ENCODE measurements at regions of chr3 and their contacts with region 1.

Region 1: DNA sequence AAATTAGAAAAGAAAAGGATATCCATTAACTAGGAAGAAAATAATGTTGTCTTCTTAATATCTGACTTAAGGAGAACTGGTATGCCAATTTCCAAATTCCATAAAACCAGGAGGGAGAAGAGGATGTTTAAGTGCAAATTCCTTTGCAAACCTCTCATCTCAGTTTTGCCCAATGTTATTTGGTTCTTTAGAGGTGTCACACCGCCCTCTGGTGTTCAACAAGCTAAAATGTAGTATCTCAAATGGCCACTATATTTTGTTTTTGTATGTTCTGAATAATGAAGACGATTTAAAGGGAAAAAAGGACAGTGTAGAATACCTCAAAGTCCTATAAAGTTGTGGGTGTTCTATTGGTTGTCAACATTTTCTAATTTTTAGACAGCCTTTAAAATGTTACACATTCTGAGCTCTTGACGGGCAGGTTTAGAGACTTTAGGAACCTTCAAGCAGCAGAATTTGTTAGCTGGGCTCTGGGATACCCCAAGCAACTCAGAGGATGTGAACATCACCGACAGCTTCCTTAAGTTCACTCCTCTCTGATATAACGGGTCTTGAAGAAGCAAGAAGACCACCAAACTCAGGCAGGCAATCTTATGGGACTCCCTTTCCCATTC is 458.3 kb downstream of the MFSD1 start:
- DNase-seq: peak in 35 of 42 donors; percentile 15 to 84 (median 56)

Region 2: DNA sequence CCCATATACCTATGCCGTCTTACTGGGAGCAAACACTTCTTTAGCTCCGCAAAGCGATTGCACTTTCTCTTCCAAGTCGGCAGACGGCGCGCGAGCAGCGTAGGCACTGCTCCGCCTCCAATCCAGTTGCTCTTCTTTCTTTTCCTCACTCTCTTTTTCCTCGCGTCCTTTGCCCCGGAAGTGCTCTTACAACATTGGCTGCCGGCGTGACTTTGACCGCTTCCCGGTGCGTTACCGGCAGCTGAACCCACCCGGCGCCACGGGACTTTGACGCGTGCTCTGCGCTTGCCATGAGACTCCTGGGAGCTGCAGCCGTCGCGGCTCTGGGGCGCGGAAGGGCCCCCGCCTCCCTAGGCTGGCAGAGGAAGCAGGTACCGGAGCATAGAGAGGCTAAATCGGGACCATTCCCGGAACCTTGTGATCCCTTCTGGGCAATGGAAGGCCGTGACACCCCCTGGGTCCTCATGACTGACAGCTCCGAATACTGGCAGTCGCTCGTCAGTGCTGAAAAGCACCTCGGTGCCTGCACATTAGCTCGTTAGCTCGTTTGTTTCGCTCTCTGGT is 615.7 kb before region 1 on chr3 and contains the start of gene GFM1:
- intact Hi-C with region 1: no loop called
- DNase-seq: peak; percentile 85 to 98 (median 95)

Region 3: DNA sequence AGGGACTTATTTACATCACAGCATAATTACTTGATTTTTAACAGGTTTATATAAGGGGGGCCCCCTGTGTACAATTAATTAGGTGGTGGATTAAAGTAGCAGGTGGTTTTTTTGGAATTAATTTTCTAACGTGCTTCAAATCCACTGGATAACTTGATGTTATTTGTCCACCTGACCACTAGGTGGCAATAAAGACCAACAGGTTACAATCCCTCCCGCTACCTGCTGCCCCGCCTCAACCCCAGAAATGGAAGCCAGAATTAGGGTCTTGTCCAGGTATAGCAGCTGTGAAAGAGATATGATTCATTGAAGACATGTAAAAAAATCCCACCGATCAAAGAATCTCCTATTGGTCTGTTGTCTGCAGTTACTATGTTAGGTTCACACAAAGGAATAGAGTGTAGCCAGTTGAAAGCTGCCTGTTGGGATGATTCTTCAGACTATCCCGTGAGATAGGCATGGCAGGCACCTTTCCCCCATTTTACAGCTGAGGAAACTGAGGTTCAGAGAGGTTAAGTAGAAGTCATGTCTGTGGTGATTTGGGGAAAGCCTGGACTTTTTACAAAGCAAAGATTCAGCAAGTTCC is 414.3 kb before region 1 on chr3:
- intact Hi-C with region 1: loop called (anchors 5 kb)
- DNase-seq: peak in 18 of 42 donors; percentile 10 to 71 (median 38)

Region 4: GRCh38 chr3:159586571-159587202 is 326.5 kb after region 1 on chr3:
- intact Hi-C with region 1: loop called (anchors 10 kb)
- DNase-seq: peak in 35 of 42 donors; percentile 3 to 61 (median 28)